ENCODE measurements at regions of chr3 and their contacts with region 1.

Region 1: DNA sequence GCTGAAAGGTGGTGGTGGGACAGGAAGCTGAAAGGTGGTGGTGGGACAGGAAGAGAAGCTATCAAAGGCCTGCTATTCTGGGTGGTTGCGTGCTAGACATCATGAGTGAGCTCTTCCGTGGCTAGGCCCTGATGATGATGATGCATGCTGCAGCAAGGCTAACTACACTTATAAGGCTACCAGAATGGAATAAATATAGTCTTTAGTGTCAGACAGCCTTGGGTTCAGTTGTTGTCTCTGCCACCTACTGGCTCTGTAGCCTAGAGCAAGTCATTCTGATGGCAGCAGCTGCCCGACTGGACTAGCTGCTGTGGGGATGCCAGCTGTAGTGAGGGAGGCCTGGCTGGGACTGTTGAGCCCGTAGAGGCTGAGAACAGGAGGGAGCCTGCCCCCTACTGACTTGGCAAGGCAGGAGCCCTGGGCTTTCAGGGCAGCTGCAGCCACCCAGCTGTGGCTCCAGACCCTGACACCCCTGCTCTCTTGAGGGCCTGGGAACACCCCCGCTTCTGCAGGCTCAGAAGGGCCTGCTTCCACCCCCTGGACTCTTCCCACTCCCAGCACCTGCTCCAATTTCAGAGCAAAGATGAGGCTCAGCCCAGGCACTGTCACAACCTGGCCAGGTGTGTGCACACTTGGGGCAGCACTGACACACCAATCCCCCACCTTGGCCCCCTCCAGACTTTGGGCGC is 21.4 kb upstream of the ZBED2 start:
- DNase-seq: peak; percentile 42 to 88 (median 74)
- H3K4me3 ChIP-seq: no peak overlapping the region
- H3K4me3 Mint-ChIP-seq: peak overlapping the region in 6 of 7 donors; percentile 1 to 61 (median 30)
- H3K27ac ChIP-seq: peak overlapping the region; percentile 40
- H3K27ac Mint-ChIP-seq: peak overlapping the region; percentile 88 to 98 (median 95)
- H3K4me1 ChIP-seq: peaks cover 31% of the 10 kb centered on the region
- H3K4me1 Mint-ChIP-seq: peaks cover 57 to 80% (median 69%) of the 10 kb centered on the region in 3 donors
- H3K27me3 ChIP-seq: no peaks in the 10 kb centered on the region
- H3K27me3 Mint-ChIP-seq: no peaks in the 10 kb centered on the region

Region 2: GRCh38 chr3:111539351-111540331 is 76.9 kb before region 1 on chr3:
- CTCF ChIA-PET with region 1: interaction called, 18 read pairs
- POLR2A ChIA-PET with region 1: interaction called, 3 read pairs
- DNase-seq: peak; percentile 44 to 77 (median 58)
- H3K4me3 ChIP-seq: peak overlapping the region; percentile 52
- H3K4me3 Mint-ChIP-seq: peak overlapping the region; percentile 72 to 88 (median 82)
- H3K27ac ChIP-seq: no peak overlapping the region
- H3K27ac Mint-ChIP-seq: peak overlapping the region in 7 of 8 donors; percentile 78 to 99 (median 93)
- H3K4me1 ChIP-seq: peaks cover 43% of the 10 kb centered on the region
- H3K4me1 Mint-ChIP-seq: peaks cover 48 to 71% (median 67%) of the 10 kb centered on the region in 3 donors
- H3K27me3 ChIP-seq: no peaks in the 10 kb centered on the region
- H3K27me3 Mint-ChIP-seq: no peaks in the 10 kb centered on the region

Region 3: DNA sequence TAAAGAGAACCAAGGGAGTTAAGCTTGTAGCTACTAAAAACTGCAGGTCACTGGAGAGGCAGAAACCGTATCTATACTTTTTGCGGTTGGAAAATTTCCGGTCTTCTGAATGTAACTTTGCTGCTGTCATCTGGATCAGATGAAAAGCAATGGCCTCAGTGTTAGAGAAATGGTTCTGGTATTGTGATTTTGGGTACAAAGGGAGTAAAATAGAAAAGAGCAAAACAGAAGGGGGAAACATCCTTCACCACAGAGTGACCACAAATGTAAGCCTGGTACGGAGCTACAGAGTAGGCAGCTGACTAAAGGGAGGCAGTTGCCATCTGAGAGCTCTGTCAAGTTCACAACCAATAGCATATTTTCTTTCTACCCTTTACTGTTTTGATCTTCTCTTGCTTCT is 68.9 kb before region 1 on chr3:
- CTCF ChIA-PET with region 1: interaction called, 12 read pairs
- POLR2A ChIA-PET with region 1: interaction called, 4 read pairs
- DNase-seq: peak in 3 of 5 donors; percentile 63 to 85 (median 70)
- H3K4me3 ChIP-seq: peak overlapping the region; percentile 31
- H3K4me3 Mint-ChIP-seq: no peak overlapping the region
- H3K27ac ChIP-seq: peak overlapping the region; percentile 46
- H3K27ac Mint-ChIP-seq: peak overlapping the region in 1 of 8 donors; percentile 71
- H3K4me1 ChIP-seq: peaks cover 80% of the 10 kb centered on the region
- H3K4me1 Mint-ChIP-seq: peaks cover 0 to 37% (median 34%) of the 10 kb centered on the region in 3 donors
- H3K27me3 ChIP-seq: no peaks in the 10 kb centered on the region
- H3K27me3 Mint-ChIP-seq: no peaks in the 10 kb centered on the region

Region 4: DNA sequence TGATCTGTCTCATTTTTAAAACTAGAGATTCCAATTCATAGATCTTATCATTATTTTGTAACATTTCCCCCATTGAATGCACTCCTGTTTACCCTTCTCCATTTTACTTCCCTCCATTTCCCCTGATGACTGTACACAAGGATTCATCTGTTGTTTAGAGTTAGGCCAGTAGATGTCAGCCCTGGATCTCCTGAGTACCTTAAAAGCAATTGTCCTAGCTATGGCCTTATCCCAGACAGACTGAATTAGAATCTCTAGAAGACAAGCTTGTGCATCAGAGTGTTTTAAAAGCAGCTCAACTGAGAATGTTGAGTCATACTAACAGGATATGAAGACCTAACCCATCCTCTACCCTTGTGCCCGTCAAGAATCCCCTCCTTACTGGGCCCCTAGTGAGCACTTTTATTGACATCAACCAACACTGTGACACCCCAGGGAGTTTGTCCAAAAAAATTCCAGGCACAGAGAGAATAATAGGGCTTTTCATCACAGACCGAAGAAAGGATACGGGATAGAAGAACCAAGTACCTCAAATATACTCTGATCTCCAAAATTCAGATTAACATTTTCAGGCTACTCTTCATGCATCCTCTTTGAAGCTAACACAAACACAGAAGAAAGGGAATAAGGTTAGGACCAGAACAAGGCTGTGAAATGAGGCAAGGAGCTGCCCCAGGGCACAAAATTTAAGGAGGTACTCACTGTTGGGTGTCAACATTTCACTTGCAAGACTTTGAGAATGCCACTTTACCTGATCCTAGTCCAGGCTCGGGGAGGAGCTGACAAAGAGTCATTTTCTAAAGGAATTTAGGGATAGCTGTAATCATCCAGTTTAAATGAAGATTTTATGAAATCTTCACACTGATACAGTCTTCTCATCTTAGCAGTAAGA is 38.5 kb before region 1 on chr3:
- CTCF ChIA-PET with region 1: interaction called, 10 read pairs
- POLR2A ChIA-PET with region 1: no interaction called
- DNase-seq: peak in 1 of 5 donors; percentile 7
- H3K4me3 ChIP-seq: no peak overlapping the region
- H3K4me3 Mint-ChIP-seq: no peak overlapping the region
- H3K27ac ChIP-seq: no peak overlapping the region
- H3K27ac Mint-ChIP-seq: peak overlapping the region; percentile 6 to 87 (median 54)
- H3K4me1 ChIP-seq: no peaks in the 10 kb centered on the region
- H3K4me1 Mint-ChIP-seq: peaks cover 61 to 89% (median 87%) of the 10 kb centered on the region in 3 donors
- H3K27me3 ChIP-seq: no peaks in the 10 kb centered on the region
- H3K27me3 Mint-ChIP-seq: no peaks in the 10 kb centered on the region

Region 5: GRCh38 chr3:111590096-111590531 is 26.4 kb before region 1 on chr3:
- CTCF ChIA-PET with region 1: interaction called, 12 read pairs
- POLR2A ChIA-PET with region 1: no interaction called
- DNase-seq: no peak
- H3K4me3 ChIP-seq: no peak overlapping the region
- H3K4me3 Mint-ChIP-seq: no peak overlapping the region
- H3K27ac ChIP-seq: no peak overlapping the region
- H3K27ac Mint-ChIP-seq: peak overlapping the region in 5 of 8 donors; percentile 35 to 70 (median 54)
- H3K4me1 ChIP-seq: peaks cover 16% of the 10 kb centered on the region
- H3K4me1 Mint-ChIP-seq: peaks cover 40 to 80% (median 75%) of the 10 kb centered on the region in 3 donors
- H3K27me3 ChIP-seq: no peaks in the 10 kb centered on the region
- H3K27me3 Mint-ChIP-seq: no peaks in the 10 kb centered on the region

Region 6: GRCh38 chr3:112794622-112795172 is 1178.1 kb after region 1 on chr3:
- CTCF ChIA-PET with region 1: no interaction called
- POLR2A ChIA-PET with region 1: no interaction called
- DNase-seq: no peak
- H3K4me3 ChIP-seq: no peak overlapping the region
- H3K4me3 Mint-ChIP-seq: peak overlapping the region in 1 of 7 donors; percentile 15
- H3K27ac ChIP-seq: peak overlapping the region; percentile 13
- H3K27ac Mint-ChIP-seq: peak overlapping the region in 5 of 8 donors; percentile 32 to 77 (median 48)
- H3K4me1 ChIP-seq: peaks cover 24% of the 10 kb centered on the region
- H3K4me1 Mint-ChIP-seq: peaks cover 14 to 26% (median 21%) of the 10 kb centered on the region in 3 donors
- H3K27me3 ChIP-seq: no peaks in the 10 kb centered on the region
- H3K27me3 Mint-ChIP-seq: no peaks in the 10 kb centered on the region

Measured in CD8-positive, alpha-beta memory T cell (primary cell).